ENCODE measurements at regions of chr17 and their contacts with region 1.

Region 1: DNA sequence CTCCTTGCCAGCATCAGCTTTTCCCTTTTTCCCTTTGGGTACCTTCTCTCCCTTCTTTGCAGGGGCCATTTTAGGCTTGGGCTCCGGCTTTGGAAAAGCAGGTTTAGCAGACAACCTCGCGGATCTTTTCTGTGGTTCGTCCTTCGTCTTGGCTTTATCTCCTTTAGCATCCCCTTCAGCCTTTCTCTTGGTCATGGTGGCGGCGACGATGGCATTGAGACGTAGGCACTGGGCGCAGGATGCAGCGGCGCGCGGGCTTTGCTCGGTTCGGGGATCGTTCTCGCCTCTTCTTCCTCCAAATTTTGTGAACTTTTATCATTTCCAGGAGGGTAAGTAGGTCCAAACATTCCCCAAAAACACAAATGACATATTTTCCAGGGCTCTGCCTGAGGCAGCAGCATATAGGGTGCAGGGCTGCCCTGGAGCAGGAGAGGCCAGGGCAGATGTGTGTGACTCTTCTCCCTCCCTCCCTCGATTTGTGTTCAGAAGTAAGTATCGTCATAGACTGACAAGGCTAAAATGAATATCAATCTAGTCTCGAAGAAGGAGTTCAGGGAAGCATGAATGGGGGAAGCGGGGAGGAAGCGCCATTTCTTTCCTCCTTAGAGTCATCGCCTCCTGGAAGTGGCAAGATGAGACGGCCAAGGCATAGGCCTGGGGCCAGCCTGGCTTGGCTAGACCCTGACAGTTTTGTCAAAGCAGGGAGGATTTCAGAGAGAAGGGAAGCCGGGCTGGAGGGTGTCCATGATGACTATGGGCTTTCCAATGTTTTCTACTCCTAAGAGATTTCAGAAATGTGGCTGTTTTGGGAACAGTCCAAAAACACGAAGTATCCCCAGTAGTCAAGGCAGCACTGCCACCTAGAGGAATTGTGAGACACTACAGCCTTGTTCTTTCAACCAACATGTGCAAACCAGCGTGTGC is 13.2 kb downstream of the CHCT1 start:
- DNase-seq: no peak
- H3K4me3 ChIP-seq: no peak overlapping the region
- H3K27ac ChIP-seq: no peak overlapping the region
- H3K4me1 ChIP-seq: peaks cover 0 to 11% (median 5%) of the 10 kb centered on the region in 6 donors
- H3K27me3 ChIP-seq: peaks cover 0 to 7% (median 0%) of the 10 kb centered on the region in 7 donors
- CTCF ChIP-seq: peak; percentile 80 to 95 (median 91)
- POLR2A ChIP-seq: no peak

Region 2: DNA sequence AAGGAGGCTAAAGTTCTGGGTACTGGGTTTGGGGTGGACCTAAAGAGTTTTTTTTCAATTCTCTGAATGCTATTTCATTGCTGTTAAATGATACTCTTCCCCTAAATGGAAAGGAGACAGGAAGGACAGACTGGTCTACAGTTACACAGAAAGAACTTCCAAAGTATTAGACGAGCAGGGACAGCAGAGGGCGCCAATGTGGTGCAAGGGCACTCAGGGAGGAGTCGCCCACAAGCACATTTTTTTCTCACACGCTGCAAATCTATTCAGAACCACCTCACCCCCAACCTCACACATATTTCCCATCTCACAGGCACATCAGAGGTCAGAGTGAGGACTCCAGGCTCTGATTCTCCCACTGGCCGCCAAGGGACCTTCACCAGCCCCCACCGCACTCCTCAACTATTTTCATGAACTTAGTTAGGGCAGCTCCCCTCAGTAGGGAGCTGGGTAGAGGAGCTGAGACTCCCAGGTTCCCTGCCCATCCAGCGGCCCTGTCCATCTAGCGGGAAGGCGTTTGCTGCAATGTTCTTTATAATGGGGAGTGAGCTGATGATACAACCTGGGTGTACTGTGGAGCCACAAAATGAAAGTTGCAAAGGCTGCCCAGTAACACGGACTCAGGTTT is 292.5 kb before region 1 on chr17:
- intact Hi-C with region 1: loop called (anchors 10 kb)
- DNase-seq: peak; percentile 92
- H3K4me3 ChIP-seq: peak overlapping the region in 3 of 8 donors; percentile 4 to 49 (median 21)
- H3K27ac ChIP-seq: peak overlapping the region in 6 of 8 donors; percentile 2 to 92 (median 54)
- H3K4me1 ChIP-seq: peaks cover 13 to 80% (median 43%) of the 10 kb centered on the region in 6 donors
- H3K27me3 ChIP-seq: peaks cover 5 to 93% (median 54%) of the 10 kb centered on the region in 7 donors
- CTCF ChIP-seq: peak in 10 of 11 experiments; percentile 20 to 75 (median 64)
- POLR2A ChIP-seq: no peak

Region 3: GRCh38 chr17:60641810-60642220 is 206.3 kb after region 1 on chr17:
- intact Hi-C with region 1: no loop called
- DNase-seq: no peak
- H3K4me3 ChIP-seq: no peak overlapping the region
- H3K27ac ChIP-seq: no peak overlapping the region
- H3K4me1 ChIP-seq: peaks cover 2 to 34% (median 5%) of the 10 kb centered on the region in 6 donors
- H3K27me3 ChIP-seq: no peaks in the 10 kb centered on the region
- CTCF ChIP-seq: peak in 6 of 11 experiments; percentile 19 to 37 (median 22)
- POLR2A ChIP-seq: no peak

Region 4: GRCh38 chr17:61399131-61400057 is 963.9 kb after region 1 on chr17 and contains the start of gene TBX2:
- intact Hi-C with region 1: no loop called
- DNase-seq: peak; percentile 74
- H3K4me3 ChIP-seq: peak within 1 kb of the TSS; percentile 27 to 69 (median 45)
- H3K27ac ChIP-seq: peak within 1 kb of the TSS; percentile 29 to 84 (median 78)
- H3K4me1 ChIP-seq: peaks cover 44 to 96% (median 78%) of the 10 kb centered on the region in 6 donors
- H3K27me3 ChIP-seq: peaks cover 45 to 100% (median 92%) of the 10 kb centered on the region in 7 donors
- CTCF ChIP-seq: peak in 1 of 11 experiments; percentile 10
- POLR2A ChIP-seq: no peak
- total RNA-seq, gene TBX2: 10.1 to 57.6 (median 32.8) TPM

Measured in spleen (tissue), 13 donors.